Psoas muscle (tissue), 8 donors: ENCODE measurements at regions of chr3 and their contacts with region 1.

Region 1: GRCh38 chr3:66038726-66039589 is at the start of gene MAGI1:
- DNase-seq: peak; percentile 88 to 94
- ATAC-seq: peak; percentile 93 to 94 (median 94)
- H3K4me3 ChIP-seq: peak within 1 kb of the TSS; percentile 75
- H3K27ac ChIP-seq: peak within 1 kb of the TSS; percentile 95
- H3K4me1 ChIP-seq: peaks cover 6% of the 10 kb centered on the region
- H3K27me3 ChIP-seq: no peaks in the 10 kb centered on the region
- CTCF ChIP-seq: no peak
- total RNA-seq, gene MAGI1: 4.5 to 6.7 (median 6.2) TPM

Region 2: DNA sequence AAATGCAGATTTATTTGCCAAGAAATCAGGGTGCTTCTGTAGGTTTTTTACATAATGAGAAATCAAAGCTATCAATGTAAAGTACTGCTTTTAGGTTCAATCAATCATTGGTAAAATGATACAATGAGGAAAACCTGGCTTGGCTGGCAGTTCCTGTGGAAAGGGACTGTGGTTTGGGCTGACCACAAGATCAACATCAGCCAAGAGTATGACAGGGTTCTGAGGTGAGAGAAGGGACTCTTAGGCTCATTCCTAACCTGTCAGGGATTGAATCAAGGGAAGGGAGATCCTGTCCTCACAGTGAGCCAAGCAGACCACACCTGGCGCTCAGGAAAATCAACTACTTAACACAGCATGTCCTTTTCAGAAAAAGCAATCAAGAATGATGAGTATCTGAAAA is 111.4 kb before region 1 on chr3:
- intact Hi-C with region 1: no loop called
- DNase-seq: no peak
- ATAC-seq: no peak
- H3K4me3 ChIP-seq: no peak overlapping the region
- H3K27ac ChIP-seq: no peak overlapping the region
- H3K4me1 ChIP-seq: peaks cover 4% of the 10 kb centered on the region
- H3K27me3 ChIP-seq: no peaks in the 10 kb centered on the region
- CTCF ChIP-seq: no peak

Region 3: GRCh38 chr3:65971293-65972252 is 67.4 kb before region 1 on chr3:
- intact Hi-C with region 1: loop called in 1 of 2 experiments (anchors 5 kb)
- DNase-seq: no peak
- ATAC-seq: no peak
- H3K4me3 ChIP-seq: no peak overlapping the region
- H3K27ac ChIP-seq: no peak overlapping the region
- H3K4me1 ChIP-seq: peaks cover 9% of the 10 kb centered on the region
- H3K27me3 ChIP-seq: no peaks in the 10 kb centered on the region
- CTCF ChIP-seq: no peak

Region 4: DNA sequence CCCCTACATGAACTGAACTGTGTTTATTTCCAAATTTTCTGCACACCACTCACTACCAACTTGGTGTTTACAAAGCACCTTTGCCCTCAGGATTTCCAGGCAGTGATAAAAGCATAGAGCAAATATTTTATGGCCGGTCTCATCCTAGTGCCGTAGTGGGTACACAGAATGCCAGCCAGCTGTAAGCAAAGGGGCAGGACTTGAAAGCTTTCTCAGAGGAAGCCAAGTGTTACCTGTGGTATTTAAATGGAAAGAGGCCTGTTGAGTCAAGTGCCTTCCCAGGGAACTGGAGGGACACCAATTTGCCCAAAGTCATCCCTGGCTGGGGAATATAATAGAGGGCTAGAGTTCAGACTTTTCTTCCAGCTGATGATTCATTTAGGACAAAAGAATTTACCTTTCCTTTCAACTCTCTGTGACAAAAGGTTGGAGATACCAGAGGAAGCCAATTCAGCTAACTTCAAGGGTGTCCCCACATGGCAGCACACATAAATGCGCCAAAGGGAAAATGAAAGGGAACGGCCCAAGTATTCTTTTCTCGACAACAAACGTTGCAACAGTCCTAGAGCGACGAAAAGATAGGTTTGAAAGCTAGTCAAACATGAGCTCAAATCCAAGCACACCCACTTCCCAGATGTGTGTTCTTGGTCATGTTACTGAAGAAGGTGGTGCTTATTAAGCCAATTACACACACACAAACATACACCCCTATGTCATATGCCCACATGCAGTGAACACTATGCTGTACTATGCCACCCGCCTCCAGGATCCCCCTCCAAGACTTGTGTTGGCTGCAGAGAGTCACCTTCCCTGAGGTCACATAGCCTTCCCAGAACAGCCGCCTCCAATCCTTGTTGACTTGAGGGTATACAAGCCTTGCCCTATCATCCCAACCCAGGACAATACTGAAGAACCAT is 28.0 kb before region 1 on chr3:
- intact Hi-C with region 1: no loop called
- DNase-seq: no peak
- ATAC-seq: no peak
- H3K4me3 ChIP-seq: no peak overlapping the region
- H3K27ac ChIP-seq: no peak overlapping the region
- H3K4me1 ChIP-seq: peaks cover 4% of the 10 kb centered on the region
- H3K27me3 ChIP-seq: no peaks in the 10 kb centered on the region
- CTCF ChIP-seq: no peak

Region 5: GRCh38 chr3:66115858-66116654 is 77.1 kb after region 1 on chr3:
- intact Hi-C with region 1: loop called in 1 of 2 experiments (anchors 5 kb)
- DNase-seq: peak; percentile 34 to 66
- ATAC-seq: peak; percentile 93 to 99 (median 98)
- H3K4me3 ChIP-seq: no peak overlapping the region
- H3K27ac ChIP-seq: peak overlapping the region; percentile 80
- H3K4me1 ChIP-seq: peaks cover 15% of the 10 kb centered on the region
- H3K27me3 ChIP-seq: no peaks in the 10 kb centered on the region
- CTCF ChIP-seq: no peak

Region 6: GRCh38 chr3:66138336-66139313 is 99.7 kb after region 1 on chr3:
- intact Hi-C with region 1: loop called in 1 of 2 experiments (anchors 5 kb)
- DNase-seq: peak in 1 of 2 donors; percentile 26
- ATAC-seq: peak; percentile 79 to 91 (median 88)
- H3K4me3 ChIP-seq: no peak overlapping the region
- H3K27ac ChIP-seq: no peak overlapping the region
- H3K4me1 ChIP-seq: peaks cover 3% of the 10 kb centered on the region
- H3K27me3 ChIP-seq: no peaks in the 10 kb centered on the region
- CTCF ChIP-seq: peak; percentile 79

Region 7: DNA sequence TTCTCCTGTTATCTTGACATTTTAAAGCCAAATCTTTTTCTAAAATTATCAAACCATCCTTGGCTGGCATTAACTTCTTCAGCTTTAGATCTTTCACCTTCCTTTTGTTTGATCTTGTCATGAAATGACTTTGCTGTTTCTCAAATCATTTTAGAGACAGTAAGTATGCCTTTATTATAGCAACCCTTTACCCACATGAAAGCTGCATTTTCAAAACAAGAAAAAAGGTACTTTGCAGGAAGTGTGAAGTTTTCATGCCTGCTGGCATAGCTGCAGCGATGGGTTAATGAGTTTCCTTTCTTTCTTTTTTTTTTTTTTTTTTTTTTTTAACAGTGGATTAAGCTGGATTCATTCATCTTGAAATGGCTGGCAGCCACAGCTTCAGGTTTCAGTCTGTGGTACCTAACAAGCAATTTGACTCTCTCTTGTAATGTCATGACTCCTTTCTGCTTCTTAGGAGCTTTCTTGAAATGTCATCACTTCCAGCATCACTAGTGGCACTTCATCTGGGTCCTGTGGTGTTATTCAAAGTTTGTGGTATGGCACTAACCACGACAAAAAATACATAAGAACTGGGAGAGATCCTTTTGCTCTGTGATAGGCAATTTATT is 200.7 kb after region 1 on chr3:
- intact Hi-C with region 1: no loop called
- DNase-seq: no peak
- ATAC-seq: no peak
- H3K4me3 ChIP-seq: no peak overlapping the region
- H3K27ac ChIP-seq: no peak overlapping the region
- H3K4me1 ChIP-seq: no peaks in the 10 kb centered on the region
- H3K27me3 ChIP-seq: no peaks in the 10 kb centered on the region
- CTCF ChIP-seq: no peak